ENCODE measurements at regions of chr10 and their contacts with region 1.

Region 1: GRCh38 chr10:119750391-119751230 is 24.8 kb downstream of the INPP5F start:
- DNase-seq: peak; percentile 37 to 72 (median 52)
- ATAC-seq: peak; percentile 98
- H3K4me3 ChIP-seq: no peak overlapping the region
- H3K27ac ChIP-seq: no peak overlapping the region
- H3K4me1 ChIP-seq: peaks cover 0 to 6% of the 10 kb centered on the region in 2 experiments; a peak in 3 of 5 replicates
- H3K27me3 ChIP-seq: no peaks in the 10 kb centered on the region
- CTCF ChIP-seq: peak; percentile 70 to 84 (median 84)
- EP300 ChIP-seq: no peak
- POLR2A ChIP-seq: no peak
- RAD21 ChIP-seq: peak; percentile 89 to 93

Region 2: DNA sequence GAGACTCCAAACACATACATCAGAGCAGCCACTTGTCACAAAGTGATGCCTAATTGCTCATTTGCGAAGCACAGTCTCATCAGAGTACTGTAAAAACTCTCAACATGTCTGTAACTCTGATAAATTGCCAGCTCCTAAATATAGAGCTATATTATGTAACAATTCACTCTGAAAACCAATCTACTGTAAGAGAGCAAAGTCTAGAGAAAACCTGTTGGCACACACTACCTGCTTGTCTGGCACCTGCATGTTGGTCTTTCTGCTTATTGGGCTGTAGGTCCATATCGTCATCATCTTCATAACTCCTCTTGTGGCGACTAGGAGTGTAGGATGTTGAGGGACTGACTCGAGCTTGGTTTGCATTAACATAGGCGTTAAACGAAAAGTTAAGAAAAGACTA is 102.2 kb after region 1 on chr10:
- CTCF ChIA-PET with region 1: interaction called, 3 read pairs
- POLR2A ChIA-PET with region 1: no interaction called
- in situ Hi-C with region 1: loop called (anchors 5 kb)
- intact Hi-C with region 1: loop called (anchors 2 kb)
- DNase-seq: no peak
- ATAC-seq: no peak
- H3K4me3 ChIP-seq: no peak overlapping the region
- H3K27ac ChIP-seq: no peak overlapping the region
- H3K4me1 ChIP-seq: no peaks in the 10 kb centered on the region
- H3K27me3 ChIP-seq: no peaks in the 10 kb centered on the region
- CTCF ChIP-seq: no peak
- EP300 ChIP-seq: no peak
- POLR2A ChIP-seq: no peak
- RAD21 ChIP-seq: no peak

Region 3: DNA sequence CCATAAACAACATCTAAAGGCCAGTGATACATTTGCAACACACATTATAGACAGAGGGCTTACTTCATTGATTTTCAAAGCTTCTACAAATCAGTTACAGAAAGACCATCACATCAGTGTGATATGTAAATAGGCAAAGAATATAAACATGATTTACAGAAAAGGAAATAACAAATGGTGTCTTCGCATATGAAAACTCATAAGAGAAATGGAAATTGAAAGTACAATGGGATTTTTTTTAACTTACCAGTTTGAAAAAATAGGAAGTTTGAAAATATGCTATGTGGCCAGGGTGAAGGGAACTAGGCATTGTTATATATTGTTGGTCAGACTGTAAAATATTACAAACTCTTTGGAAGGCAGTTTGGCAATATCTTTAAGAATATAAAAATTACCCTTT is 169.2 kb after region 1 on chr10:
- CTCF ChIA-PET with region 1: interaction called, 3 read pairs
- POLR2A ChIA-PET with region 1: no interaction called
- in situ Hi-C with region 1: no loop called
- intact Hi-C with region 1: loop called (anchors 5 kb)
- DNase-seq: no peak
- ATAC-seq: no peak
- H3K4me3 ChIP-seq: no peak overlapping the region
- H3K27ac ChIP-seq: no peak overlapping the region
- H3K4me1 ChIP-seq: no peaks in the 10 kb centered on the region
- H3K27me3 ChIP-seq: no peaks in the 10 kb centered on the region
- CTCF ChIP-seq: no peak
- EP300 ChIP-seq: no peak
- POLR2A ChIP-seq: no peak
- RAD21 ChIP-seq: no peak

Measured in K562 (cell line).